Activated B cell treated with CpG ODN at 0.5 μM for 24 hours (primary cell): ENCODE measurements at regions of chr11 and their contacts with region 1.

Region 1: DNA sequence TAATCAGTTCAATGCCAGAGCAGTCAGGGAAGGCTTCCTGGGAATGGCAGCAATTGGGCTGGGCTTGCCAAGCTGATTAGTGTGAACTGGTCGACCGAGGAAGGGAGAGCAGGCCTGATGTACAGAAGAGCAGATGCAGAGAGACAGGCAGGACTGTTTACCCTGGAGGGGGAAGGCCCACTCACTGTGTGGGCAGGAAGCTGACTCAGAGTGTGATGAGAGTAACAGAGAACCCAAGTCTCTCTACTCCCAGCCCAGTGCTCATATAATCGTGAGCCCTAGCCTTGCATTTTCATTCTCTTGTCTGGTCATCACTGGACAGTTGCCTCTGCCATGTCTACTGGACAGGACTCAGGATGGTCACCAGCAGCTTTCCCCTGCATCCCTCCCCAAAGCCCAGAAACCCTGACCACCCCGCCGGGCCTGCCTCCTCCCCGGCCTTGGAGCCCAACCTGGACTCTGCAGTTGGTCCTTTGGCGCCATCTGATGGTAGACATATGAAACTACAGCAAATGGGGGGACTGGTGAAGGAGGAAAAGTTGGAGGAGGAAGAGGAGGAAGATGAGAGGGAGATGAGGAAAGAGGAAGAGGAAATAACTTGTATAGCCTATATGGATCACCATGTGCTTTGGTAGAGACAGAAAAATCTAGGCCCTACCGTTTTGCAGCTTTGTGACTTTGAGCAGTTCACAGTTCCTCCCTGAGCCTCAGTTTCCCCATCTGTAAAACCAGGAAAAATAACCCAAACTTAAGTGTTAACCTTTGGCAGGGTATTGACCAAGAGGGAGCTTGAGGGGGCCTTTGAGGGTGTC is 43.4 kb upstream of the PRDM11 start:
- DNase-seq: peak; percentile 70
- ATAC-seq: peak; percentile 98
- H3K4me3 Mint-ChIP-seq: peak overlapping the region; percentile 85
- H3K27ac Mint-ChIP-seq: peak overlapping the region; percentile 88
- H3K4me1 Mint-ChIP-seq: peaks cover 19% of the 10 kb centered on the region
- H3K27me3 Mint-ChIP-seq: peaks cover 13% of the 10 kb centered on the region
- CTCF ChIP-seq: peak; percentile 99

Region 2: DNA sequence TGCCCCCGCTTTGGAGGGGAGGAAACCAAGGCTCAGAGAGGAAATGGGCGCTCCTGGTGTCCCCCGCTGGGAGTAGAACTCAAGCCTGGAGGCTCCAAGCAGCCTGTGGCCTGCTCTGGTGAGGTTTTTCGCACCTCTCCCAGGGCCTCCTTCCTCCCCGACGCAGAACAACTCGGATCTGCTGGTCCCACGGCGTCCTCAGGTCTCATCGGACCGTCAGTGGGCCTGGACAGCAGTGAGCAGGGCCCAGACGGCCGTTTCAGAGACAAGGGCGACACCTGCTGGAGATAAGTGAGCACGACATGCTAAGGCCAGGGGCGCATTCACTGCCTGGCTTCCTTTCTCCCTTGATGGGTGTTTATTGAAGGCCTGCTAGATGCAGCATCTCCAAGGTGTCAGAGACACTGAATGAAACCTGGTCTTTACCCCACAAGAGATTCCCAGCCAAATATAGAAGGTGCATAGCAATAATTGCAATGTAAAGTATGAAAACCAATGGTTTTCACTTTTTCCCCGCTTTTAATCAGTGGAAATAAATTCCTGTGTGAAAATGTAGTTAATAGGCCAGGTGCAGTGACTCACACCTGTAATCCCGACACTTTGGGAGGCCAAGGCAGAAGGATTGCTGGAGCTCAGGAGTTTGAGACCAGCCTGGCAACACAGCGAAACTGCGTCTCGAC is 564.5 kb before region 1 on chr11:
- CTCF ChIA-PET with region 1: no interaction called
- POLR2A ChIA-PET with region 1: no interaction called
- intact Hi-C with region 1: no loop called
- DNase-seq: peak; percentile 67
- ATAC-seq: peak; percentile 97
- H3K4me3 Mint-ChIP-seq: no peak overlapping the region
- H3K27ac Mint-ChIP-seq: no peak overlapping the region
- H3K4me1 Mint-ChIP-seq: peaks cover 3% of the 10 kb centered on the region
- H3K27me3 Mint-ChIP-seq: peaks cover 19% of the 10 kb centered on the region
- CTCF ChIP-seq: peak; percentile 37

Region 3: DNA sequence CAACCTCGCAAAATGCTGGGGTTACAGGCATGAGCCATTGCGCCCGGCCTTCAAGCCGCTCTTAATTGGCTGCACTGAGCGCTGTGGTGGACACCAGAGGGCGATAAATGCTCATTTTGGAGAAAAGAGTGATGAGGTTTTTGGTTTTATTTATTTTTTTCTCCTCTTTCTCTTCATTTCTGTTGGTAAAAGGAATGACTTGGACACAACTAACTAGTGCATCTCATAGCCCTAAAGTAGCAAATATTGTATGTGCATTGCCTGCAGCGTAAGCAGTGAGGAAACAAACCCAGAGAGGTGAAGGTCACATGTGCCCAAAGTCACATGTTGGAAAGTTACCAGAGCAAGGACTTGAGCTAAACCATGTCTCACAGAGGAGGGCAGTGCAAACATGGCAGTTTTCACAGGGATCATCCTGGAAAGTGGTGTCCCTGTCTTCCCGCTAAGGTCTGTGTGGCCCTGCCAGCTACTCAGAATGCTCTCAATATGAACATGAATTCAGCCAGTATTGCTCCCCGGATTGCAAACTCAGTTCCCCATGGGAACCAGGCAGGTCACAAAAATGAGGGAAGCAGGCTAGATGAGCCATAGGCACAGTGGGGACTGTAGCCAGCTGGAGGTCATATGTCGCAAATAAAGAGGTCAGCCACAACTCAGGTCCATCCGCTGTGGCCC is 546.1 kb before region 1 on chr11:
- CTCF ChIA-PET with region 1: interaction called, 5 read pairs
- POLR2A ChIA-PET with region 1: no interaction called
- intact Hi-C with region 1: loop called (anchors 5 kb)
- DNase-seq: no peak
- ATAC-seq: peak; percentile 51
- H3K4me3 Mint-ChIP-seq: peak overlapping the region; percentile 49
- H3K27ac Mint-ChIP-seq: peak overlapping the region; percentile 90
- H3K4me1 Mint-ChIP-seq: peaks cover 64% of the 10 kb centered on the region
- H3K27me3 Mint-ChIP-seq: no peaks in the 10 kb centered on the region
- CTCF ChIP-seq: peak; percentile 21

Region 4: DNA sequence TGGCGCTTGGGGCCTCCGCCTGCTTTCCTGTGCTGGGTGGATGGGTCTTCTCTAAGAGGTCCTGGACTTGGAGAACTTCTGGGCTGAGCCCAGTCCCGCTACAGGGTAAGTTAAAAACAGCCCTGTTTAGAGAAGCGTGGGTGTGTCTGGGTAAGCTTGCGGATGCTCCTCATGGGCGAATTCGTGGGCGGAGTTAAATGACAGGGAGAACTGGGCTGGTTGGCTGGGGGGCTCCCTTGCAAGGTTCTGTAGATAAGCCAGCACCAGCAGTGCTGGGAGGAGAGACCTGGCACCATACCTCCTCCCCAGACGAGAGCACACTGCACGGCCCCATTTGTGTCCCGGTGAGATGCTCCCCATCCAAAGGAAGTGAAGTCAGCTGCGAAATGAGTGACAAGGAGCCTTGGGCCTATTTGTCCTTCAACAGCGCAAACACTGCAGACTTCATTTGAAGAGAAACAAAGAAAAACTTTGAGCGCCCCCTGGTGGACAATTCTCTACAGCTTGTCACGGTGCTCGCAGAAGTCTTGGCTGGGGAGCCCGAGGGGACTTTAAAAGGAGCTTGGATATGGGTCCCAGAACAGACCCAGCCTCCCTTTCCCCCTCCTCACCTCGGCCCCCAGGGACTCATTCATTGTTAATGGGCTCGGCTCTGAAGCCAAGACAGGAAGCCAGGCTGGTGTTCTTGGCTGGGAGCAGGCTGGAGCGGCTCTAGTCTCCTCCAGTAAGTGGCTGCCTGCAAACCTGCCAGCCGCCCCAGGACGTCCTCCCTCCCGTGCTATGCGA is 191.8 kb before region 1 on chr11:
- CTCF ChIA-PET with region 1: interaction called, 13 read pairs
- POLR2A ChIA-PET with region 1: no interaction called
- intact Hi-C with region 1: no loop called
- DNase-seq: peak; percentile 57
- ATAC-seq: peak; percentile 80
- H3K4me3 Mint-ChIP-seq: no peak overlapping the region
- H3K27ac Mint-ChIP-seq: no peak overlapping the region
- H3K4me1 Mint-ChIP-seq: peaks cover 20% of the 10 kb centered on the region
- H3K27me3 Mint-ChIP-seq: no peaks in the 10 kb centered on the region
- CTCF ChIP-seq: peak; percentile 39

Region 5: GRCh38 chr11:44943118-44943517 is 159.9 kb before region 1 on chr11:
- CTCF ChIA-PET with region 1: interaction called, 1,010 read pairs
- POLR2A ChIA-PET with region 1: interaction called, 72 read pairs
- intact Hi-C with region 1: no loop called
- DNase-seq: peak; percentile 74
- ATAC-seq: peak; percentile 94
- H3K4me3 Mint-ChIP-seq: peak overlapping the region; percentile 76
- H3K27ac Mint-ChIP-seq: peak overlapping the region; percentile 80
- H3K4me1 Mint-ChIP-seq: peaks cover 92% of the 10 kb centered on the region
- H3K27me3 Mint-ChIP-seq: no peaks in the 10 kb centered on the region
- CTCF ChIP-seq: no peak

Region 6: GRCh38 chr11:45031912-45032519 is 71.0 kb before region 1 on chr11:
- CTCF ChIA-PET with region 1: interaction called, 37 read pairs
- POLR2A ChIA-PET with region 1: interaction called, 19 read pairs
- intact Hi-C with region 1: loop called (anchors 1 kb)
- DNase-seq: no peak
- ATAC-seq: peak; percentile 40
- H3K4me3 Mint-ChIP-seq: peak overlapping the region; percentile 55
- H3K27ac Mint-ChIP-seq: peak overlapping the region; percentile 81
- H3K4me1 Mint-ChIP-seq: peaks cover 64% of the 10 kb centered on the region
- H3K27me3 Mint-ChIP-seq: no peaks in the 10 kb centered on the region
- CTCF ChIP-seq: no peak

Region 7: GRCh38 chr11:45332276-45332934 is 229.4 kb after region 1 on chr11:
- CTCF ChIA-PET with region 1: interaction called, 153 read pairs
- POLR2A ChIA-PET with region 1: no interaction called
- intact Hi-C with region 1: no loop called
- DNase-seq: no peak
- ATAC-seq: peak; percentile 81
- H3K4me3 Mint-ChIP-seq: no peak overlapping the region
- H3K27ac Mint-ChIP-seq: no peak overlapping the region
- H3K4me1 Mint-ChIP-seq: peaks cover 2% of the 10 kb centered on the region
- H3K27me3 Mint-ChIP-seq: peaks cover 26% of the 10 kb centered on the region
- CTCF ChIP-seq: no peak